ENCODE measurements at regions of chr2 and their contacts with region 1.

Region 1: GRCh38 chr2:19362755-19363473 is 4.5 kb upstream of the OSR1 start:
- DNase-seq: peak; percentile 82
- H3K4me3 Mint-ChIP-seq: peak overlapping the region; percentile 81
- H3K27ac Mint-ChIP-seq: peak overlapping the region; percentile 46
- H3K4me1 Mint-ChIP-seq: peaks cover 10% of the 10 kb centered on the region
- H3K27me3 Mint-ChIP-seq: peaks cover 57% of the 10 kb centered on the region
- CTCF ChIP-seq: peak; percentile 64

Region 2: GRCh38 chr2:18387441-18388206 is 975.3 kb before region 1 on chr2:
- CTCF ChIA-PET with region 1: no interaction called
- intact Hi-C with region 1: loop called (anchors 5 kb)
- DNase-seq: peak; percentile 76
- H3K4me3 Mint-ChIP-seq: no peak overlapping the region
- H3K27ac Mint-ChIP-seq: no peak overlapping the region
- H3K4me1 Mint-ChIP-seq: no peaks in the 10 kb centered on the region
- H3K27me3 Mint-ChIP-seq: no peaks in the 10 kb centered on the region
- CTCF ChIP-seq: peak; percentile 90

Region 3: DNA sequence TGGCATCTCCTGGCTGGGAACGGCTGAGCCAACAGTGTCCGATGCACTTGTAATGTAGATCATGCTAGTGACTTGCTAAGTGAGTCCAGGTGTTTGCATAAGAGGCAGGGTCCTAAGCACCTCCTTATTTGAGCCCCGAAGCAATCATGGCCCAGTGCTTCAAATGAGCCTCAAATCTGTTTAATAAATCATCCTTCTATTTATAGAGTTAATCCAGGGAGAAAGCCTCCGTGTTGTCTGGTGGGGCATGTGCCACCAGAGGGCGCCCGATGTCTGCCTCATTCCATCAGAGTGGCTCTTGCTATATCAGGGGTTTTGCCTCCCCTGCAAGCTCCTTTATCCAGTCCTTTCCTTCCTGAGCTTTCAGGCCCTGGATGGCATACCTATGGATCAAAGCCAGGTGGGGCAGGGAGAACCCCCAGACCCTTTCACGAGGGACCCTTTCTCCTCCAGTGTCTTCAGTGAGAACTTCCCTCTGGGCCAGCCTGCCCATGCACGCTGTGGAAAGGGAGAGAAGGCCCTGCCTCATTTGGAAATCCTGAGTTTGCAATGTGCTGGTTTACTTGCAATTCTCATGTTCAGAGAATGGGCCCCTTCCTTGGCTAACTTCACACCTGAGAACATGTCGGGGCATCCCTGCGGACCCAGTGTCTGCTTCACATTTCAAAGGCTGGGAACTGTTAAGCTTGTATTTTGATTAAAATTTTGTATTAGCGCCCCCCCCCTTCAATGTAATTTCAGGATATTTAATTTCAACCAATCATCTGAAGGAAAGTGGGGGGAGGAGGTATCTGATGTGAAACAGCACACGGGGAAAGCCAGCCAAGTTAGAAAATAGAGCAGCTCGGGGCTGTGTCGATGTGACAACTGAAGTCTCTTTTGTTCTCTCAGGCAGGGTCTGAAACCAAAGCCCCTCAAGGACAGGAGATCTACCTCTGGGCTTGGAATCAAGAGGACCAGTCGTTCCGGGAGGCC is 842.2 kb before region 1 on chr2:
- CTCF ChIA-PET with region 1: interaction called, 4 read pairs
- intact Hi-C with region 1: loop called (anchors 1 kb)
- DNase-seq: peak; percentile 83
- H3K4me3 Mint-ChIP-seq: no peak overlapping the region
- H3K27ac Mint-ChIP-seq: no peak overlapping the region
- H3K4me1 Mint-ChIP-seq: peaks cover 10% of the 10 kb centered on the region
- H3K27me3 Mint-ChIP-seq: peaks cover 56% of the 10 kb centered on the region
- CTCF ChIP-seq: peak; percentile 89

Region 4: GRCh38 chr2:18883616-18884456 is 479.1 kb before region 1 on chr2:
- CTCF ChIA-PET with region 1: no interaction called
- intact Hi-C with region 1: loop called (anchors 1 kb)
- DNase-seq: peak; percentile 54
- H3K4me3 Mint-ChIP-seq: no peak overlapping the region
- H3K27ac Mint-ChIP-seq: no peak overlapping the region
- H3K4me1 Mint-ChIP-seq: peaks cover 8% of the 10 kb centered on the region
- H3K27me3 Mint-ChIP-seq: no peaks in the 10 kb centered on the region
- CTCF ChIP-seq: no peak

Region 5: DNA sequence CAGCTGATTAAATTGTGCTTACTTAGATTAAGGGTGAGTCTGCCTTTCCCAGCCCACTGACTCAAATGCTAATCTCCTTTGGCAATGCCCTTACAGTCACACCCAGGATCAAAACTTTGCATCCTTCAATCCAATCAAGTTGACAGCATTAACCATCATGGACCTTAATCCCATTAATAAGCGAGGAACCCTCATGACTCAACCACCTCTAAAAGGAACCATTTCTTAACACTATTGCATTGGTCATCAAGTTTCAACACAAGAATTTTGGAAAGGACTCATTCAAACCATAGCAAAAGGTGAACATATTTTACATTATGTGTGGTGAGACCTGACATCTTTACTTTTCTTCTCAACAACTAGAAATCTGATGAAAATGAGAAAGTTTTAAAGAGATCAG is 191.5 kb before region 1 on chr2:
- CTCF ChIA-PET with region 1: interaction called, 10 read pairs
- intact Hi-C with region 1: no loop called
- DNase-seq: no peak
- H3K4me3 Mint-ChIP-seq: no peak overlapping the region
- H3K27ac Mint-ChIP-seq: no peak overlapping the region
- H3K4me1 Mint-ChIP-seq: no peaks in the 10 kb centered on the region
- H3K27me3 Mint-ChIP-seq: no peaks in the 10 kb centered on the region
- CTCF ChIP-seq: no peak

Region 6: DNA sequence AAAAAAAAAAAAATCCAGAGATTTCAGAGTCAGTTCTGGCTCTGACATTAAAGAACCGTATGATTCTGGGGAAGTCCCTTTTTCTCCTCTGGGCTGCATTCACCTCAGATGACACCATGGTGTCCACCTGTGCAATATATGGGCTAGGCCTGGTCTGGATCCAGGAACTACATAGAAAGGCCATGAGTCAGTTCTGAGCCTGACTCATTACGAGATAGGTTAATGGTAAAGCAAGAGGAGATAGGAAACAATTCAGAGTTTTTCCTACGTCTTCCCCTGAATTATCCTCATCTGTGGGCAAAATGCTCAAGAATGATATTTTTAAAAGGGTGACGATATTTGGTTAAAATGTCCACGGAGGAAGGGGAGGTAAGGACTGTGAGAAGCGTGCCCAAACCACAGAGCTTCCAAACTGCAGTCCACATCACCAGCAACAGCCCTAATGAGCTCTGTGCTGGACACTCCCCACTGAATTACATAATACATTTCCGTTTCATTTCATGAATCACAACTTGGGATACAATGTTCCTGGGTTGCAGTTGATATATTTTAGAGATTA is 175.6 kb after region 1 on chr2:
- CTCF ChIA-PET with region 1: no interaction called
- intact Hi-C with region 1: loop called (anchors 5 kb)
- DNase-seq: peak; percentile 77
- H3K4me3 Mint-ChIP-seq: peak overlapping the region; percentile 51
- H3K27ac Mint-ChIP-seq: peak overlapping the region; percentile 93
- H3K4me1 Mint-ChIP-seq: peaks cover 80% of the 10 kb centered on the region
- H3K27me3 Mint-ChIP-seq: no peaks in the 10 kb centered on the region
- CTCF ChIP-seq: no peak